Transverse colon (tissue), 4 donors: ENCODE measurements at regions of chr1 and their contacts with region 1.

Region 1: DNA sequence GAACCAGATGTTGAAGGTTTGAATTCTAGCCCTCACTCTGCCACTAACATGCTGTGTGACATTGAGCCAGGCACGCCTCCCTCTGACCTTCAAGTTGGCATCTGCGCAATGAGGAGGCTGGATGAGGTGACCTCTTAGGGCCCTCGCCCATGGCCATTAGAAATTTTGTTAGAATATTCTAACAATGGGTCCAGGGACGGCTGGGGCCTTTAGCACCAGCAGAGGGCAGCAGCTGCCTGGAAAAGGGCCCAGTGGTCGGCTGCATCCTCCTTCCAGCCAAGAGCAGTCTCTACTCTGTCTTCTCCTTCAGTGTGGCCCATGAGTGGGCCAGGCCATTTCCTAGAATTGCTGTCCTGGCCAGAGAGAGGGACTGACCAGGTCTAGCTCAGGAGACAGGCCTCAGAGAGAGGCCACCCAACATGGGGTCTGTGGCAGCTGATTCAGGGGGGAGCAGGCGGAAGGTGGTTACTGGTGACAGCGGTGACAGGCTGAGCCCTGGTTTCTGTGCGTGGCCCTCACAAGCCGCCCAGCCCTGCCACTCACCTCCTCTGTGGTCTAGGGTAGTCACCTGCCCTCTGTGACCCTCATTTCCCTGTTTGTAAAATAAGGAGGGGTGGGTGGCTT is 101.3 kb upstream of the ACTL8 start:
- DNase-seq: no peak
- H3K4me3 ChIP-seq: no peak overlapping the region
- H3K27ac ChIP-seq: no peak overlapping the region
- H3K4me1 ChIP-seq: no peaks in the 10 kb centered on the region
- H3K27me3 ChIP-seq: no peaks in the 10 kb centered on the region
- CTCF ChIP-seq: peak; percentile 31 to 47 (median 37)
- EP300 ChIP-seq: no peak
- POLR2A ChIP-seq: no peak

Region 2: GRCh38 chr1:17719874-17720273 is 66.0 kb after region 1 on chr1:
- in situ Hi-C with region 1: no loop called
- intact Hi-C with region 1: no loop called
- DNase-seq: no peak
- H3K4me3 ChIP-seq: no peak overlapping the region
- H3K27ac ChIP-seq: no peak overlapping the region
- H3K4me1 ChIP-seq: no peaks in the 10 kb centered on the region
- H3K27me3 ChIP-seq: peaks cover 3% of the 10 kb centered on the region
- CTCF ChIP-seq: no peak
- EP300 ChIP-seq: no peak
- POLR2A ChIP-seq: no peak

Region 3: GRCh38 chr1:18234790-18235242 is 581.0 kb after region 1 on chr1:
- in situ Hi-C with region 1: no loop called
- intact Hi-C with region 1: loop called (anchors 10 kb)
- DNase-seq: peak; percentile 40
- H3K4me3 ChIP-seq: no peak overlapping the region
- H3K27ac ChIP-seq: no peak overlapping the region
- H3K4me1 ChIP-seq: no peaks in the 10 kb centered on the region
- H3K27me3 ChIP-seq: peaks cover 13% of the 10 kb centered on the region
- CTCF ChIP-seq: peak; percentile 54 to 70 (median 64)
- EP300 ChIP-seq: no peak
- POLR2A ChIP-seq: no peak